Activated T-helper 1 cell treated with anti-CD3 and anti-CD28 coated beads, Interleukin-12 subunit alpha, Interleukin-12 subunit beta, Interleukin-2, Interleukin-4 antibody, amounts not matched to agents 30 ng/mL and 10 ng/mL and 1 ng/mL, durations not matched to agents 14 hours and 24 hours and 36 hours (primary cell): ENCODE measurements at regions of chr2 and their contacts with region 1.

Region 1: GRCh38 chr2:190880378-190881073 is at the start of gene GLS:
- DNase-seq: peak; percentile 95
- H3K4me3 Mint-ChIP-seq: peak within 1 kb of the TSS; percentile 91
- H3K27ac Mint-ChIP-seq: peak within 1 kb of the TSS; percentile 97
- H3K4me1 Mint-ChIP-seq: peaks cover 40% of the 10 kb centered on the region
- H3K27me3 Mint-ChIP-seq: no peaks in the 10 kb centered on the region
- total RNA-seq, gene GLS: 220 and 237 TPM in 2 replicates

Region 2: DNA sequence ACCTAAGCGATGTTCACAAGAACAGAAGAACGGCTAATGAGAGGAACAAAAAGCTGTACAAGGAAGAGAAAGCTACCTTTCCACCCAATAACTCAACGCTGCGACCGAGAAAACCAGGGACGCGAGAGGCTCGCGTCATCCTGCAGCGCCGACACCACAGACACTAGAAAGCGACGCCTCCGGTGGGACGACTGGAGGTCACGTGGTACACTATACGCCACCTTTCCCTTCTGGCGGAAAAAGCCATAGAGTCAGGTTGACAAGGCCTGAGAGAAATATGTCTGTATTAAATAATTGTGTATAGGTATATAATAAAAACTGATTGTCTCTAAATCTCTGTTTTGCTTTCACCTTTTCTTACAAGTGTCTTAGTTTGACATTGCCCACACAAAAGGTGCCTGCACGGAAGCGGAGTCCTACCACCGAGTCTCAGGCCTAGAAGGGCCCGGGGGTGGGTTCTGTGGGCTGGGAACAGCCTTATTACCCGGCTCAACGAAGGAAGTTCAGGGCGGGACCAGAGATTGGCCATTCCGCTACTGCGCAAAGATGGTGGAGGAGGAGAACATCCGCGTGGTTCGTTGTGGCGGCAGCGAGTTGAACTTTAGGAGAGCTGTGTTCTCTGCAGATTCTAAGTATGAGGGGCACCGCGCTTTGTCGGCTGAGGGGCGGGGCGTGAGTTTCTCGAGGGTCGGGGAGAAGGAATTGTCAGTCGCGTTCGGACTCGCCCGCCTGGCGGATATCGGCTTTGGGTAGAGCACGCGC is 1439.4 kb before region 1 on chr2 and contains the start of gene WDR75:
- intact Hi-C with region 1: loop called (anchors 5 kb)
- DNase-seq: peak; percentile 89
- H3K4me3 Mint-ChIP-seq: no peak within 1 kb of the TSS
- H3K27ac Mint-ChIP-seq: peak within 1 kb of the TSS; percentile 99
- H3K4me1 Mint-ChIP-seq: peaks cover 8% of the 10 kb centered on the region
- H3K27me3 Mint-ChIP-seq: peaks cover 3% of the 10 kb centered on the region
- total RNA-seq, gene WDR75: 108 and 112 TPM in 2 replicates

Region 3: DNA sequence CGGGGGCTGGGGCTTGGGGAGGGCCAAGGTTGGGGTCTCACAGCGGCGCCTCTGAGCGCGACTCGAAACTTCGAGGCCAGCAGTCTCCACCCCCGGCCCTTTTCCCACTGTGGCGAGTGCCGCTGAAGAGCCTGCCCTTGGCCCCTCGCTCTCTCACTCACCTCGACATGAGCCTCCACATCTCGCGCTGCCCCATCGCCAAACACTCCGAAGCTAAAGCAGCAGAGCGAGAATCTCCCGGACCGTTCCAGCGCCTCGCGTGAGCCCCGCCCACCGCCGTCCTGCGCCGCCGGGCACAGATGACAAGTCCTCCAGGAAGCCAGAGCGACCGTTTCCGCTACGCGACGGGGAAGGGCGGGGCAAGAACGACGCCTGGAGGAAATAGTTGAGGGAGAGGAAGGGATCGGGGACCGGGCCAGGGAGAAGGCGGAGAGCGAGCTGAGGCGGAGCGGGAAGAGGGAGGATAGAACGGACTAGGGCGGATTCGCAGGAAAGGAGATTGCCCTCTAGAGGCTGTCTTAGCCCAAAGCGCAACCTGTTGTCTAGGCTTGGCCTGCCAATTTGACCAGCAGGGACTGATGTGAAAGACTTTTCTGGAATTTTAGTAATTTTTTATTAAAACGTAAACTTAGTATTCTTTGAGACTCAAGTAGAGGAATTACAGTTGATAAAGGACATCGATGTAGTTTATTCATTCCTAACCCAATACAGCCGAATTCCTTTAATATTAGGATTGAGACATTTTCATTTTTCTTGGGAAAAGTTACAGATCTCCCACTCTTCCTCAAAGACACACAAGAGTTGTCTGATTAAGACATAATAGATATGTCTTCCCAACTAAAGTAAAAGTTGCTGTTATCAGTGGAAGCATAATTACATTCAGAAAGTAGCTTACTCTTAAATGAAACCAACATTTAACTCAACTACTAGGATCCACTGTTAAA is 560.7 kb before region 1 on chr2 and contains the start of gene HIBCH:
- intact Hi-C with region 1: loop called (anchors 2 kb)
- DNase-seq: peak; percentile 84
- H3K4me3 Mint-ChIP-seq: peak within 1 kb of the TSS; percentile 90
- H3K27ac Mint-ChIP-seq: peak within 1 kb of the TSS; percentile 91
- H3K4me1 Mint-ChIP-seq: peaks cover 47% of the 10 kb centered on the region
- H3K27me3 Mint-ChIP-seq: no peaks in the 10 kb centered on the region
- total RNA-seq, gene HIBCH: 24.6 and 27.1 TPM in 2 replicates

Region 4: GRCh38 chr2:190679813-190680591 is 200.5 kb before region 1 on chr2:
- intact Hi-C with region 1: loop called (anchors 1 kb)
- DNase-seq: peak; percentile 27
- H3K4me3 Mint-ChIP-seq: peak overlapping the region; percentile 69
- H3K27ac Mint-ChIP-seq: peak overlapping the region; percentile 87
- H3K4me1 Mint-ChIP-seq: peaks cover 53% of the 10 kb centered on the region
- H3K27me3 Mint-ChIP-seq: no peaks in the 10 kb centered on the region

Region 5: GRCh38 chr2:190904640-190905261 is 24.2 kb after region 1 on chr2:
- intact Hi-C with region 1: loop called (anchors 1 kb)
- DNase-seq: no peak
- H3K4me3 Mint-ChIP-seq: no peak overlapping the region
- H3K27ac Mint-ChIP-seq: no peak overlapping the region
- H3K4me1 Mint-ChIP-seq: peaks cover 9% of the 10 kb centered on the region
- H3K27me3 Mint-ChIP-seq: no peaks in the 10 kb centered on the region

Region 6: GRCh38 chr2:191020221-191020741 is 139.8 kb after region 1 on chr2:
- intact Hi-C with region 1: loop called (anchors 1 kb)
- DNase-seq: peak; percentile 96
- H3K4me3 Mint-ChIP-seq: no peak overlapping the region
- H3K27ac Mint-ChIP-seq: no peak overlapping the region
- H3K4me1 Mint-ChIP-seq: peaks cover 45% of the 10 kb centered on the region
- H3K27me3 Mint-ChIP-seq: peaks cover 2% of the 10 kb centered on the region

Region 7: DNA sequence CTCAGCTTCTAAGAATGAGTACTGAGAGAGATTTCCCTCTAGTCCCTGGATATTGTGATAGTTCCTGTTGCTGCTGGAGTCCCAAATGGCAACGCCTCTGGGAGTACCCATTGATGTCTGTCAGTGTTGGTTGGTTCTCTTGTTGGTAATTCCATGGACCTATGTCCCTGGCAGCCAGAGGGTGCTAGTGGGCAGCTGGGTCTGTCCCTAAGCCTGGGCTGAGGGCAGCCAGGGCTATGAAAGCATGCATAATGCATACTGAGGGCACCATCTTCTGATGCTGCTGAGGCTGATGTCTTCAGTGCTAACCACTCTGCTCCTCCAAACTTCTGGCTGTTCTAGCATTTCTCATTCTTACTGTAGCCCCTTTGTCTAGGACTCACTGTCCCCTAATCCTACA is 833.3 kb after region 1 on chr2:
- intact Hi-C with region 1: no loop called
- DNase-seq: no peak
- H3K4me3 Mint-ChIP-seq: no peak overlapping the region
- H3K27ac Mint-ChIP-seq: no peak overlapping the region
- H3K4me1 Mint-ChIP-seq: no peaks in the 10 kb centered on the region
- H3K27me3 Mint-ChIP-seq: peaks cover 3% of the 10 kb centered on the region